PC-9 (cell line): ENCODE measurements at regions of chr1 and their contacts with region 1.

Region 1: GRCh38 chr1:170445096-170445495 is 86.9 kb upstream of the GORAB start:
- DNase-seq: no peak
- H3K4me3 ChIP-seq: no peak overlapping the region
- H3K27ac ChIP-seq: peak overlapping the region; percentile 48; the same call in 1 of the 2 replicates
- H3K4me1 ChIP-seq: peaks cover 12% of the 10 kb centered on the region
- H3K27me3 ChIP-seq: no peaks in the 10 kb centered on the region
- CTCF ChIP-seq: no peak

Region 2: GRCh38 chr1:170388489-170388888 is 56.6 kb before region 1 on chr1:
- CTCF ChIA-PET with region 1: no interaction called
- POLR2A ChIA-PET with region 1: no interaction called
- intact Hi-C with region 1: loop called (anchors 5 kb)
- DNase-seq: no peak
- H3K4me3 ChIP-seq: no peak overlapping the region
- H3K27ac ChIP-seq: no peak overlapping the region
- H3K4me1 ChIP-seq: no peaks in the 10 kb centered on the region
- H3K27me3 ChIP-seq: no peaks in the 10 kb centered on the region
- CTCF ChIP-seq: no peak